Activated naive CD4-positive, alpha-beta T cell treated with anti-CD3 and anti-CD28 coated beads for 36 hours (primary cell): ENCODE measurements at regions of chr7 and their contacts with region 1.

Region 1: GRCh38 chr7:66493235-66494181 is 135.2 kb upstream of the KCTD7 start:
- DNase-seq: peak; percentile 96
- H3K4me3 Mint-ChIP-seq: peak overlapping the region; percentile 84
- H3K27ac Mint-ChIP-seq: peak overlapping the region; percentile 93
- H3K4me1 Mint-ChIP-seq: peaks cover 11% of the 10 kb centered on the region
- H3K27me3 Mint-ChIP-seq: no peaks in the 10 kb centered on the region

Region 2: GRCh38 chr7:65872776-65873581 is 620.5 kb before region 1 on chr7 and contains the start of gene VKORC1L1:
- CTCF ChIA-PET with region 1: no interaction called
- intact Hi-C with region 1: loop called (anchors 2 kb)
- DNase-seq: peak; percentile 95
- H3K4me3 Mint-ChIP-seq: peak within 1 kb of the TSS; percentile 78
- H3K27ac Mint-ChIP-seq: no peak within 1 kb of the TSS
- H3K4me1 Mint-ChIP-seq: peaks cover 6% of the 10 kb centered on the region
- H3K27me3 Mint-ChIP-seq: no peaks in the 10 kb centered on the region
- total RNA-seq, gene VKORC1L1: 8.9 to 10.1 TPM

Region 3: DNA sequence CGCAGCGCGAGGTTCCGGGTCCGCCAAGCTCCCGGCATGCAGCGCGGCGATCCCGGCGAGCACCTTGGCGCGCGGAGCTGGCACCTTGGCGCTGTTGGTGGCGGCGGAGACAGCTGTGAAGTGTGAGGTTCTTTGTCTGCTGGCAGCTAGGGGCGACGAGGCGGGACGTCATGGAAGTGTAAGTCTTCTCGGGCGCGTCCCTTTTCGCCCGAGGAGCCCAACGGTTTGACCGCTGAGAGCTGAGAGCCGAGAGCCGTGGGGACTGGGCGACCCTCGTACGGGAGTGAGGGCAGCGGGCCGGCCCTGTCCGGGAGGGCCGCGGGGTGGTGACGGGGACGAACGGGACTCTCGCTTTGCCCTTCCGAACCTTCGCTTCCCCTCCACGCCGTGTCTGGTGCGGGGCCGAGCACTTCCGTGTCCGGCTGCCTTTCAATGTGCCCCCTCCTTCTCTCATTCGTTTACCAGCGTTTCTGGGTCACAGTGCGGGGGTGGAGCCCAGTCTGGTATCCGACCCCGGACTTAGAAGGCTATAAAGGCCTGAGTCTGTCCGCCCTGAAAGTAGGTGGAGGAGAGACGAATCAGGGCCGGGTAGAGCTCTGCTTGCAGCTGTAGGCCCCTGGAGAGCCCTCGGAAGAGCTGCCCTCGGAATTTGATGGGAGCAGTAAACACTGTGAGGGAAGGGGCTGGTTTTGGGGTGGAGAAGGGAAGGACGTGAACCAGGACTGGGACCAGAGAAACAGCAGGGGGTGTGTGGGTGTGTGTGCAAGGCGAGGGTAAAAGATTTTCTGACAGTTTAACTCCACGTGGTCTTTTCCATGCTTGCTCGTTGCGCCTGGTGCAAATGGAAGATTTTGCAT is 378.5 kb before region 1 on chr7 and contains the start of gene CRCP:
- CTCF ChIA-PET with region 1: no interaction called
- intact Hi-C with region 1: loop called (anchors 5 kb)
- DNase-seq: peak; percentile 87
- H3K4me3 Mint-ChIP-seq: peak within 1 kb of the TSS; percentile 99
- H3K27ac Mint-ChIP-seq: peak within 1 kb of the TSS; percentile 93
- H3K4me1 Mint-ChIP-seq: peaks cover 43% of the 10 kb centered on the region
- H3K27me3 Mint-ChIP-seq: no peaks in the 10 kb centered on the region
- total RNA-seq, gene CRCP: 18.5 to 19.6 TPM

Region 4: DNA sequence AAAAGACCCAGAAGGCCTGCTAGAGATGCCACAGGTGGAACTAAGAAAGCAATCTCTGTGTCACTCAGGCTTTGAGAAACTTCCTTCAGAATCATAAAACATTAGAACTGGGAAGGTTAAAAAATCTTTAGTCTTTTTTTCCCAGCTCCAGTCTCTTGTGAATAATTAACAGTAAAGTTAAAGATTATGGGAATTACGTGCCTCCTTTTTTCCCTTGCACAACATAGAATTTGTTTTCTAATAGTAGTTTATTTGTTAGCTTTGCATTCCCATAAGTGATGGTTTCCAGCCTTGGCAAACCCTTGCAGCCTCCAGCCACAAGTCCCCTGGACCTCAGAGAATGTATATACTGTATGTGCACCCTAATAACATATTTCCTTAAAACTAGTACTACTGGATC is 160.1 kb before region 1 on chr7:
- CTCF ChIA-PET with region 1: no interaction called
- intact Hi-C with region 1: no loop called
- DNase-seq: no peak
- H3K4me3 Mint-ChIP-seq: no peak overlapping the region
- H3K27ac Mint-ChIP-seq: no peak overlapping the region
- H3K4me1 Mint-ChIP-seq: no peaks in the 10 kb centered on the region
- H3K27me3 Mint-ChIP-seq: no peaks in the 10 kb centered on the region

Region 5: DNA sequence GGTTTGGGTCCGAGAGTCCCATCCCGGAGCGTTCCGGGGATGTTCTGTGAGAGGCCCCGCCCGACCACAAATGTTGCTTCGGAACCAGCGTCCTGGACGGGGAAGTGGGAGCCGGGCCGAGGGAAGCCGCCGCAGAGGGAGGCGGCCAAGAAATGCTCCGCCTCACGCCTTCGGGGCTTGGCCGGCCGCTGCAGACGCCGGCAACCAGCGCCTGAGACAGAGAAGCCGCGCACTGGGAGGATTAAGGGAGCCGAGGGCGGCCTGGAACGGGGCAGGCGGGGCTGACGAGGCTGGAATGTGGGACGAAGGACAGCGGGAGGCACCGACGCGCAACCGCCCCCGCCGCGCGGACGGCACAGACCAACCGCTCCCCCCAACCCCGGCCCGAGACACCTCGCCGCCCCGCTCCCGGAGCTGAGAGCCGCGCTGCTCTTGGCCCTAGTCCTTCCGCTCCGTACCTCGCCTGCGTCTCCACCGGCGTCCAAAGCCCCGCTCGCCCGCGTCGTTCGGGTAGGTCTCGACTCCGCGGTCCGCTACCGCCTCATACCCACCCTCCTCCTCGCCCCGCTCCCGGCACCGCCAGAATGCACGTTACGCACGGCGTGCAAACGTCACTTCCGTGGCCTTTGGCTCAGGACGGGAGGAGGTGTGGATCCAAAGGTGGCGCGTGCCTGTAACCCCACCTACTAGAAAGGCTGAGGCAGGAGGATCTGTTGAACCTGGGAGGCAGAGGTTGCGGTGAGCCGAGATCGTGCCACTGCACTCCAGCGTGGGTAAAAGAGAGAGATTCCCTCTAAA is 98.5 kb after region 1 on chr7:
- CTCF ChIA-PET with region 1: no interaction called
- intact Hi-C with region 1: loop called (anchors 1 kb)
- DNase-seq: peak; percentile 96
- H3K4me3 Mint-ChIP-seq: peak overlapping the region; percentile 98
- H3K27ac Mint-ChIP-seq: peak overlapping the region; percentile 96
- H3K4me1 Mint-ChIP-seq: peaks cover 44% of the 10 kb centered on the region
- H3K27me3 Mint-ChIP-seq: no peaks in the 10 kb centered on the region

Region 6: GRCh38 chr7:66681491-66682349 is 188.2 kb after region 1 on chr7:
- CTCF ChIA-PET with region 1: no interaction called
- intact Hi-C with region 1: loop called (anchors 1 kb)
- DNase-seq: peak; percentile 95
- H3K4me3 Mint-ChIP-seq: peak overlapping the region; percentile 87
- H3K27ac Mint-ChIP-seq: peak overlapping the region; percentile 89
- H3K4me1 Mint-ChIP-seq: peaks cover 29% of the 10 kb centered on the region
- H3K27me3 Mint-ChIP-seq: no peaks in the 10 kb centered on the region

Region 7: DNA sequence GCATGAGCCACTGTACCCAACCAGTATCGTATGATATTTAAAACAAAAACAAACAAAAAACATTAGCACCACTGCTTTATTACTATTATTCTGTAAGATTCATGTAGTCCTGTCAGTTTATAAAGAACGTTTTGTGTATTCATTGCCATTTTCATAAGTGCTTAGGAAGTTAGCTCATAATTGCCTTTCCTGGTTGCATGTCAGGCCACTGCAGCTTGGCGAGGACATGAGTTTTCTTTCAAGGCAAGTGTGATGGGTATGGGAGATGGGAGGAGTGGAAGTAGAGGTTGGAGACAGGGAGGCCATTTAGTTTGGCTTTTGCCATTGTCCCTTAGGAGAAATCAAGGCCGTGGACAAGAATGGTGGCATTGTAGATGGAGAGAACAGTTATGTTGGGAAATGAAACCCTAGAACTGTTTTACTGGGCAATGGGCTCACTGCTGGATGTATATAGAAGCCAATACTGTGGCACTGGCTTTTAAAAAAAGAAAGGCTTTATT is 552.0 kb after region 1 on chr7:
- CTCF ChIA-PET with region 1: no interaction called
- intact Hi-C with region 1: no loop called
- DNase-seq: no peak
- H3K4me3 Mint-ChIP-seq: no peak overlapping the region
- H3K27ac Mint-ChIP-seq: no peak overlapping the region
- H3K4me1 Mint-ChIP-seq: peaks cover 6% of the 10 kb centered on the region
- H3K27me3 Mint-ChIP-seq: no peaks in the 10 kb centered on the region

Region 8: GRCh38 chr7:67302113-67303039 is 808.9 kb after region 1 on chr7:
- CTCF ChIA-PET with region 1: no interaction called
- intact Hi-C with region 1: loop called (anchors 1 kb)
- DNase-seq: peak; percentile 100
- H3K4me3 Mint-ChIP-seq: peak overlapping the region; percentile 89
- H3K27ac Mint-ChIP-seq: peak overlapping the region; percentile 92
- H3K4me1 Mint-ChIP-seq: peaks cover 26% of the 10 kb centered on the region
- H3K27me3 Mint-ChIP-seq: no peaks in the 10 kb centered on the region